ENCODE measurements at regions of chr6 and their contacts with region 1.

Region 1: GRCh38 chr6:87154993-87155841 is at the start of gene ZNF292:
- DNase-seq: peak; percentile 99
- H3K4me3 Mint-ChIP-seq: peak within 1 kb of the TSS; percentile 88
- H3K27ac Mint-ChIP-seq: peak within 1 kb of the TSS; percentile 95
- H3K4me1 Mint-ChIP-seq: peaks cover 48% of the 10 kb centered on the region
- H3K27me3 Mint-ChIP-seq: peaks cover 2% of the 10 kb centered on the region
- total RNA-seq, gene ZNF292: 61.2 and 63.7 TPM in 2 replicates

Region 2: GRCh38 chr6:85642774-85643536 is 1512.3 kb before region 1 on chr6 and contains the start of gene SYNCRIP:
- intact Hi-C with region 1: loop called (anchors 2 kb)
- DNase-seq: peak; percentile 100
- H3K4me3 Mint-ChIP-seq: peak within 1 kb of the TSS; percentile 99
- H3K27ac Mint-ChIP-seq: peak within 1 kb of the TSS; percentile 100
- H3K4me1 Mint-ChIP-seq: peaks cover 42% of the 10 kb centered on the region
- H3K27me3 Mint-ChIP-seq: peaks cover 2% of the 10 kb centered on the region
- total RNA-seq, gene SYNCRIP: 228 and 232 TPM in 2 replicates

Region 3: DNA sequence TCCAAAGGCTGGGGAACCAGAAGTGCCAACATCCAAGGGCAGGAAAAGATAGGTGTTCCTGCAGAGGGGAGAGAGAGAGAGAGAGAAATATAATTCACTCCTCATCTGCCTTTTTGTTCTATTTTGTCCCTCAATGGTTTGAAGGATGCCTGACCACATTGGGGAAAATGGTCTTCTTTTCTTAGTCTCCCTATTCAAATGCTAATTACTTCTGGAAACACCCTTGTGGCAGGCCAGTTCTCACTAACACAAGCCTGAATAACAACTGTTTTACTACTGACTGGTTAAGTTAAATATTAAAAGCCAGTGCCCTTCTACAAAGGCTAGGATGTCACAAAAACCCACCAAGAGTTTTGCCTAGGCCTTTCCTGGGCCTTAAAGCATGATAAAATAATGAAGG is 643.3 kb before region 1 on chr6:
- intact Hi-C with region 1: no loop called
- DNase-seq: no peak
- H3K4me3 Mint-ChIP-seq: no peak overlapping the region
- H3K27ac Mint-ChIP-seq: no peak overlapping the region
- H3K4me1 Mint-ChIP-seq: no peaks in the 10 kb centered on the region
- H3K27me3 Mint-ChIP-seq: no peaks in the 10 kb centered on the region

Region 4: GRCh38 chr6:87078983-87079616 is 76.1 kb before region 1 on chr6:
- intact Hi-C with region 1: no loop called
- DNase-seq: peak; percentile 85
- H3K4me3 Mint-ChIP-seq: no peak overlapping the region
- H3K27ac Mint-ChIP-seq: no peak overlapping the region
- H3K4me1 Mint-ChIP-seq: no peaks in the 10 kb centered on the region
- H3K27me3 Mint-ChIP-seq: peaks cover 11% of the 10 kb centered on the region

Region 5: DNA sequence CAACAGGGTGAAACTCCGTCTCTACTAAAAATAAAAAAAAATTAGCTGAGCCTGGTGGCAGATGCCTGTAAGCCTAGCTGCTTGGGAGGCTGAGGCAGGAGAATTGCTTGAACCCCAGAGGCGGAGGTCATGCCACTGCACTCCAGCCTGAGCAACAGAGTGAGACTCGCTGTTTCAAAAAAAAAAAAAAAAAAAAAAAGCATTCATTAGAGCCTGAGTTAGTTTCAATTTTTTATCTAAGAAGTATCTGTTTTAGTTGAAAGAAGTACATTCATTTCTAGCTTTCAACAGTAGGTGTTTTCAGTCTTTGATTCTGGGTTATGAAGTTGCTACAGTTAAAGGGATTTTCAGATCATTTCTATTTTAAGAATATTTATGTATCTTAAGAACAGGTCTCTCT is 42.3 kb after region 1 on chr6:
- intact Hi-C with region 1: loop called (anchors 1 kb)
- DNase-seq: no peak
- H3K4me3 Mint-ChIP-seq: no peak overlapping the region
- H3K27ac Mint-ChIP-seq: no peak overlapping the region
- H3K4me1 Mint-ChIP-seq: peaks cover 43% of the 10 kb centered on the region
- H3K27me3 Mint-ChIP-seq: no peaks in the 10 kb centered on the region

Region 6: DNA sequence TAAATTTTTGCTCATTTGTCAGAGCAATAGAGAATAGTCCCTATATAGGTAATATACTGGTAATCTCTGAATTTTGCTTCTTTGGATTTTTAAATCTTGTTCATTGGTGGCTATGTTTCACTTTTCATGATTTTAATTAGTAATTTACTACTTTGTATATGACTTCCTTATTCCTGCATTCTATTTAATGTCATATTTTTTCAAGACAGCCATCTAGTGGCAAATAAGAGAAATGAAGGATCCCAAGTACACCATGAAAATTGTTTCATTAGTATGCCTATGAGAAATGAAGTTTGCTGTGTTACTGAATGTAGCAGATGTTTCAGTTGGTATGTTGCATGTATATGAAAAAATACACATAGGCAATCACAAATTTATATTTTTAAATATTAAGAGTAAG is 82.6 kb after region 1 on chr6:
- intact Hi-C with region 1: loop called (anchors 1 kb)
- DNase-seq: no peak
- H3K4me3 Mint-ChIP-seq: no peak overlapping the region
- H3K27ac Mint-ChIP-seq: no peak overlapping the region
- H3K4me1 Mint-ChIP-seq: peaks cover 12% of the 10 kb centered on the region
- H3K27me3 Mint-ChIP-seq: no peaks in the 10 kb centered on the region

Region 7: DNA sequence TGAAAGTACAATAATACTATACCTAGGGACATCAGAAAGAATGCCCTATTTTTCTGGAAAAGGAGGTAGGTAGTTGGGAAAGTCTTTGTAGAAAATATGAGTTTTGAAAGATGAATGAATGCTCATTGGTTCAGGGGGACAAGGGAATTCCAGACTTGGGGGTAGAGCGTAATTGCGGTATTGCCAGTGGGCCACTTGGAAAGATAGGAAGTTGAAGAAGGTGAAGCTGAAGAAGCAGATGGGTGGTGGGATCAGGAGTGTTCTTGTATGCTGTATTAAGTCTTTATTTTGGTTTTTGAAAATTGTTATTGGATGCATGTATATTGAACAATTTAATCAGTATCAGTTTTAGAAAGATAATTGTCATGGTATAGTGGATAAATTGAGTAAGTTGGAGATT is 109.3 kb after region 1 on chr6:
- intact Hi-C with region 1: no loop called
- DNase-seq: no peak
- H3K4me3 Mint-ChIP-seq: no peak overlapping the region
- H3K27ac Mint-ChIP-seq: no peak overlapping the region
- H3K4me1 Mint-ChIP-seq: peaks cover 7% of the 10 kb centered on the region
- H3K27me3 Mint-ChIP-seq: no peaks in the 10 kb centered on the region

Region 8: DNA sequence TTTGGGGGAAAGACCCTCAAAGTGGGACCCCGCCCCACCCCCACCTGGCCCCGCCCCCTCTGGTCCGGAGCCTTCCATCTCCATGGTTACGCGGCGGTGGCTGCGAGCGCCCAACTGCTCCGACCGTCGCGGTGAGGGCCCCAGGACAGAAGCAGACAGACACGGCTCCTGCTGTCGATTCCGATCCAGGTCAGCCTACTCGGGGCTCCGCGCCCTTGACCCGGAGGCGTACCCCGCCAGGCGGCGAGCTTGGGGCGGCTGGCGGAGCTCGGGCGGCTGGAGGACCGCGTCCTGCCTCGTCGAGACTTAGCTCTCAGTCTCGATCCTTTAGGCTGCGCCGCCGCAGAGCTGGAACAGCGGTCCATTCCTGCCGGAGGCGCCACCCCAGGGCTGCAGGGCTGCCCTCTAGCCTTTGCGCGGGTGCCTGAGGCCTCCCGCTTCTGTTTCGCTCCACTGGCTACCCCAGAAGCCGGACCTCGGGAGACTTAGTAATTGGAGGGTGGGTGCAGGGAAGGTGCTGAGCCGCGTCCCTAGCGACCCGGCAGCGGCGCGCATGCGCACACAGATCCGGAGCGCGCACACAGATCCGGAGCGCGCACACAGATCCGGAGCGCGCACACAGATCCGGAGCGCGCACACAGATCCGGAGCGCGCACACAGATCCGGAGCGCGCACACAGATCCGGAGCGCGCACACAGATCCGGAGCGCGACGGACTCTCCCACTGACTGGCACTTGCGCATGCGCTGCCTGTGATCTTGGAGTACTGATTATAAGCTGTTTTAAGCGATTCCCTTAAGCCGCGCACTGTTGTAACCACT is 252.9 kb after region 1 on chr6 and contains the start of gene CFAP206:
- intact Hi-C with region 1: loop called (anchors 5 kb)
- DNase-seq: peak; percentile 91
- H3K4me3 Mint-ChIP-seq: peak within 1 kb of the TSS; percentile 86
- H3K27ac Mint-ChIP-seq: peak within 1 kb of the TSS; percentile 59
- H3K4me1 Mint-ChIP-seq: peaks cover 3% of the 10 kb centered on the region
- H3K27me3 Mint-ChIP-seq: peaks cover 25% of the 10 kb centered on the region
- total RNA-seq, gene CFAP206: not detected in 2 replicates

Region 9: GRCh38 chr6:87589693-87590549 is 434.7 kb after region 1 on chr6 and contains the starts of genes ORC3 and RARS2:
- intact Hi-C with region 1: loop called (anchors 1 kb)
- DNase-seq: peak; percentile 99
- H3K4me3 Mint-ChIP-seq: peak within 1 kb of the TSS; percentile 92
- H3K27ac Mint-ChIP-seq: peak within 1 kb of the TSS; percentile 84
- H3K4me1 Mint-ChIP-seq: peaks cover 44% of the 10 kb centered on the region
- H3K27me3 Mint-ChIP-seq: no peaks in the 10 kb centered on the region
- total RNA-seq, gene ORC3: 35.5 and 38.6 TPM in 2 replicates
- total RNA-seq, gene RARS2: 22.6 and 22.7 TPM in 2 replicates

Region 10: GRCh38 chr6:87618531-87618930 is 463.3 kb after region 1 on chr6:
- intact Hi-C with region 1: no loop called
- DNase-seq: no peak
- H3K4me3 Mint-ChIP-seq: no peak overlapping the region
- H3K27ac Mint-ChIP-seq: peak overlapping the region; percentile 9
- H3K4me1 Mint-ChIP-seq: peaks cover 15% of the 10 kb centered on the region
- H3K27me3 Mint-ChIP-seq: no peaks in the 10 kb centered on the region

Measured in activated CD4-positive, alpha-beta T cell treated with anti-CD3 and anti-CD28 coated beads, Interleukin-2, amount 10 ng/mL, durations not matched to agents 24 days and 14 days (primary cell).